Left cardiac atrium (tissue), 4 donors: ENCODE measurements at regions of chr10 and their contacts with region 1.

Region 1: DNA sequence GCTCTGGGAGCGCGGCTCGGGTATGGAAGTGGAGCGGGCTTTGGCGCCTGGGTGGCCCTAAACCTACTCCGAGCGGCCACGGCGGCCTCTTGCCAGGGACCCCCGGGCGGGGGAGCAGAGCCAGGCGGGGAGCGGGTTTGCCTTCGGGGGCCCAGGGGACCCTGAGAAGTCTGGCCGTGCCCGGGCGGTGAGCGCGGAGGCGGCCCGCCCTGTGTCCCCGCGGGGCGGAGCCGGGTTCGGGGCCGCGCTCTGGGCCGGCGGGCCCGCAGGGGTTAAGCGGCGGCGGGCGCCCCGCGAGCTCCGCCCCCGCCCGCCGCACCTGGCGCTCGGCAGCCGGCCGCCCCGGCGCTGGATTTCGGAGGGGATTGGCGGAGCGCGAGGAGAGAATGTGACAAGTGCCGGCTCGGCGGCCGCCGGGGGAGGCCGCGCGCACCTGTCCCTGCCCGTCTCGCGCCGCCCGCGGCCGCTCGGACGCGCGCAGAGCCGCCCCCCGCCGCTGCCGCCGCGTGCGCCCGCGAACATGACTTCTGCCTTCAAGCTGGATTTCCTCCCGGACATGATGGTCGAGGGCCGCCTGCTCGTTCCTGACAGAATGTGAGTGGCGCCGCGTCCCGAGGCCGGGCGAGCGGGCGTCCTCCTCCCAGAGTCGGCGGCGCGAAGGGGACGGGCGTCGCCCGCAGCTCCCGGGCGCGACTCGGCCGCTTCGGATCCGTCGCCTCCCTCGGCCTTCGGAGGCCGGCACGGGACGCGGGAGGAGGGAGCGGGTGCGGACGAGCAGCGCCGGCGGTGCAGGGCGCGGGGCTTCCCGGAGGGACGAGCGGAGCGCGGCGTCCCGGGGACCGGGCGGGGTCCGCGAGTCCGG is at the start of gene CELF2:
- DNase-seq: peak; percentile 74
- ATAC-seq: peak; percentile 82
- total RNA-seq, gene CELF2: 68.4 to 72.5 TPM

Region 2: GRCh38 chr10:10551596-10552301 is 466.1 kb before region 1 on chr10:
- intact Hi-C with region 1: no loop called
- DNase-seq: no peak
- ATAC-seq: no peak

Region 3: DNA sequence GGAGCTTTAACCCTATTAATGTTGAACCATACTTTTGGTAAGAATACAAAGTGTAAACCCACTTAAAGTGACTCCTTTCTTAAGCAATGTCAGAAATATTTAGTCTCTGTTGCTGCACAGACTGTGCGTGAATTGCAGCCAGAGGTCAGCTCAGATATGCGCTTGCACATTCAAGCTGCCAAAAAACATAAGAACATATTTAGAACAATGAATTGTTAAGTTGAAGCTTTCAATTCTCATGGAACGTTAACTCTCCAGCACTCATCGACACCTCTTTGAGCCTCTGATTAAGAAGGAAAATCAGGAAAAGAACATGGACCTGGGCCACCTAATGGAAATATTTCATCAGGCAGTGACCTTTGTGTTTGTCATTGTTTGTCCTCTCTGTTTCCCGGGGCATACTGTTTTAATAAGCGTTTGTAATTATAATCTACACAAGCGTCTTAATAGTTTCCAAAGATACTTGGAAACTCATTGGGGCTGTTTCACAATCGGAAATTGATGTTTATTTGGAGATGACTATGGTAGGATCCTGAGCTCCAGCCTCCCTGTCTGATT is 193.1 kb before region 1 on chr10:
- intact Hi-C with region 1: loop called in 1 of 2 experiments (anchors 10 kb)
- DNase-seq: peak; percentile 74
- ATAC-seq: peak; percentile 84 to 87

Region 4: GRCh38 chr10:10911471-10911921 is 106.3 kb before region 1 on chr10:
- intact Hi-C with region 1: loop called in 1 of 2 experiments (anchors 10 kb)
- DNase-seq: peak; percentile 78
- ATAC-seq: peak; percentile 81 to 95